ENCODE measurements at regions of chr17 and their contacts with region 1.

Region 1: DNA sequence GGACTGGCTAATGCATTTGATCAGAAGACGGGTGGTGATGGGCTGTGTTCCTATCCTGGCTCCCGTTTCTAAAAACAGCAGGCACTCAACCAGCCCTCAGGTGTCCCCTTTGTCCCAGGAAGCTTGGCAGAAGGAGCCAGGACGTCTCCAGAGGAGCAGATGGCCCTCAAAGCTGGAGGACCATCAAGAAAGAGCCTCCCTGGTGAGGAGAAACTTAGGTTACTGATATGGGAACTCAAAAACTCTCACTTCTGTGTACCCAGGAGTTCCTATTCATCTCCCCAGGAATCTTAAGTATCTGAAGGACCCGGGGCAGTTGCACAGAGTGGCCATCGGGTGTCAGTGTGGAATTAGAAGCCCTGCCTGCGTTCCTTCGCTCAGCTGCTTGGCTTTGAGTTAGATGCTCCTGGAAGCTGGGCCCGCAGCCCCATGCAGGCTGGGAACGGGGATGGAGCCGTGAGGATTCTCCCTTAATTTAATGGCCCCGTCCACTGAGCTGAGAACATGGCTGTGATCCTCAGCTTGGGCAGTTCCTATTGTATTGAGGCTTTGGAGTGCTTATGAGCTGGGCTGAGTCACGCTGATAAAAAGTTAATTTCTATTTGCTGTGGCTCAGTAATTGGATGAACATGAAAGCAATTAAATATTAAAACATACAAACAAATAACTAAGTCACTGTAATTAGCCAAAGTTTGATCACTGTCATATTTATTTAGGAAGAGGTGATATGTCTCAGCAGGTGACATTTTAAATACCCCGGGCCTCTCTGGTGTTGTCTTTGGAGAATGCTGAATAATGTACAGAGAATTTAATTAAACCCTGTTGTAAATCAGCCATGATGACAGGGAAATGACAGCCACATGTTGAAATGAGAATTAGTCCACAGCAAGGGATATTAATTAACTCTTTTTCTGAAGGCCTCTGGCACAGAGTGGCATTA is 402.1 kb downstream of the SEC14L1 start:
- DNase-seq: peak; percentile 76
- H3K4me3 ChIP-seq: no peak overlapping the region
- H3K27ac ChIP-seq: no peak overlapping the region
- H3K4me1 ChIP-seq: peaks cover 0 to 22% (median 4%) of the 10 kb centered on the region in 4 donors
- H3K27me3 ChIP-seq: peaks cover 14% of the 10 kb centered on the region
- CTCF ChIP-seq: peak; percentile 84 to 90 (median 87)
- EP300 ChIP-seq: no peak
- POLR2A ChIP-seq: no peak

Region 2: GRCh38 chr17:77634710-77635109 is 91.9 kb after region 1 on chr17:
- in situ Hi-C with region 1: no loop called
- intact Hi-C with region 1: no loop called
- DNase-seq: peak; percentile 20
- H3K4me3 ChIP-seq: no peak overlapping the region
- H3K27ac ChIP-seq: no peak overlapping the region
- H3K4me1 ChIP-seq: no peaks in the 10 kb centered on the region
- H3K27me3 ChIP-seq: peaks cover 25% of the 10 kb centered on the region
- CTCF ChIP-seq: no peak
- EP300 ChIP-seq: no peak
- POLR2A ChIP-seq: no peak

Region 3: GRCh38 chr17:78013683-78014467 is 471.1 kb after region 1 on chr17:
- in situ Hi-C with region 1: loop called (anchors 5 to 25 kb)
- intact Hi-C with region 1: loop called (anchors 5 kb)
- DNase-seq: peak; percentile 48
- H3K4me3 ChIP-seq: no peak overlapping the region
- H3K27ac ChIP-seq: no peak overlapping the region
- H3K4me1 ChIP-seq: peaks cover 0 to 9% (median 3%) of the 10 kb centered on the region in 4 donors
- H3K27me3 ChIP-seq: no peaks in the 10 kb centered on the region
- CTCF ChIP-seq: peak; percentile 67 to 79 (median 71)
- EP300 ChIP-seq: no peak
- POLR2A ChIP-seq: no peak

Region 4: DNA sequence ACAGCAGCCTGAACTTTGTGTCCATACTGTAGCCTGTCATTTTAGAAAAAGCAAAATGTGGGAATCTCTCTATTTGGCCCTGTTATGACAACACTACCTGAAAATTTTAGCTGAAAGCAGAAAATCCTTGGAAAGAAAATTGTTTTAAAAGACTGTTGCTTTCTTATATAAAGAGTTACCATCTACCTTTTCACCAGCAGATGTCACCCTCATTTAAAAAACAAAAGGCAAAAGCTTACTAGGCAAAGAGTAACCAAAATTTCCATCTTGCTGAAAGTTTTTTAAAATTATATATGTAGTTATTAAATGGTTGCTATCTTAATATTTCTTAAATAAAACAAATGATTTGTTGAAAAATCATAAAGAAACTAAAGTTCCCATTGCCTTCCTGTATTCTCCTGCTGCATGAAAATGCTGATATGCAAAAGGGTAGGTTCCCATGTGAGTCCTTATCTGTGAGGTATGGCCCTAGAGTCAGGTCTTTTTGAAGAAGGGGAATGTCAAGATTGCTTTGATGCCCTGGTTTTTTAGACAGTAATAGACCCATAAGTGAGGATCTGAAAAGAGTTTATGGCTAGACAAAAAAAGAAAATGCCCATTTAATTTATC is 476.6 kb after region 1 on chr17:
- in situ Hi-C with region 1: loop called (anchors 5 to 25 kb)
- intact Hi-C with region 1: loop called (anchors 5 kb)
- DNase-seq: no peak
- H3K4me3 ChIP-seq: no peak overlapping the region
- H3K27ac ChIP-seq: peak overlapping the region in 2 of 4 donors; percentile 10 to 39
- H3K4me1 ChIP-seq: peaks cover 0 to 4% (median 0%) of the 10 kb centered on the region in 4 donors
- H3K27me3 ChIP-seq: no peaks in the 10 kb centered on the region
- CTCF ChIP-seq: peak; percentile 49 to 63 (median 58)
- EP300 ChIP-seq: no peak
- POLR2A ChIP-seq: no peak